ENCODE measurements at regions of chr3 and their contacts with region 1.

Region 1: DNA sequence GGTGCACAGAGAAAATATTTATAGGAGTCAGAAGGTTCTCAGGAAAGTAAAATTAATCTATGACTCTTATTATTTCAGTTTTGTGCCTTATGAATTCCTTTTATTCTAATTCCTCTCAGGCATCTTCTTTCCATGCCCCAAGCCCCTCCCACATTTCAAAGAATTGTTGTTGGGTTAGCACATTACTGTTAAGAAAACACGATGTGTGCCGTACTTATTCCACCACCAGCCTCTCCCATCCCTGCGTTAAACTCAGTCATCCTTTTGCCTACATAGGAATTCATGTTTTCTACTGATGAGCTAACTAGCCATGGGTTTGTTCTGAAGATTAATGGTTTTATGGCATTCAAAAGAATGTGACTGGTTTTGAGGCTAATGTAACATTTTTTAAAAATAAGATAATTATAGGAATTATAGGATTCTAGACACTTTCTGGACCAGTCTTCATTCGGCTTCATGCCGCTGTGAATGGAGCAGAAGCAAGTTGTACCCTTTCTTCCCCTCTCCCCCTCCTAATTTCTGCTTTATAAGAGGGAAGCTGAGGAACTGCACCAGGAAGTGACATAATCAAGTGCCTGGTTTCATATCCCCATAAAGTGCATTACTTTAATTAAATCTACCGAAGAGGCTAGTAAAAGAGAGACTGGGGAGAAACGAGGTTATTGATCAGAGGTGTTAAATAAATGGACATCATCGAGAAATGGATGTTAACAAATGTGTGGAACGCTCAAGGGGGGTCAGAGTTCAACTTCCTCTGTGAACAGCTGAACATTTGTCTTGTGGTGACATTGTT is 12.3 kb upstream of the MB21D2 start:
- DNase-seq: no peak
- H3K4me3 ChIP-seq: no peak overlapping the region
- H3K27ac ChIP-seq: no peak overlapping the region
- H3K4me1 ChIP-seq: no peaks in the 10 kb centered on the region
- H3K27me3 ChIP-seq: no peaks in the 10 kb centered on the region
- CTCF ChIP-seq: no peak
- POLR2A ChIP-seq: no peak

Region 2: DNA sequence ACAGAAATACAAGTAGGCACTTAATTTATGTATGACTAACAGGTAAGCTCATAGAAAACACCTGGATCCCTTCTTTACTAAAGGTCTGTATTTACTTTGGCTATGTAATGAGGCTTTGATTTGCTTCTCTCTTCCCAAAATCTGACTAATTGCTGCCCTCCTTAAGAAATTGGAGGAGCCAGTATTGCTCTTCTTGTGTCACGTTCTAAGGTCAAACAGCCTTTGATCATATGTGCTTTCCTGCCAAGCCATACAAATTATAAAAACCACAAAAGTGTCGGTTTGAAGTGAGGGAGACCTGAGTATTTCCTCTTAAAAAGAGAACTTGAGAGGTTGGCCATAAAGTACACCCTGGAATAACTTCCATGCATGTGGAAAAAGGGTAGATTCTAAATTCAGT is 99.8 kb after region 1 on chr3:
- intact Hi-C with region 1: loop called (anchors 10 kb)
- DNase-seq: no peak
- H3K4me3 ChIP-seq: no peak overlapping the region
- H3K27ac ChIP-seq: no peak overlapping the region
- H3K4me1 ChIP-seq: no peaks in the 10 kb centered on the region
- H3K27me3 ChIP-seq: no peaks in the 10 kb centered on the region
- CTCF ChIP-seq: no peak
- POLR2A ChIP-seq: no peak

Region 3: DNA sequence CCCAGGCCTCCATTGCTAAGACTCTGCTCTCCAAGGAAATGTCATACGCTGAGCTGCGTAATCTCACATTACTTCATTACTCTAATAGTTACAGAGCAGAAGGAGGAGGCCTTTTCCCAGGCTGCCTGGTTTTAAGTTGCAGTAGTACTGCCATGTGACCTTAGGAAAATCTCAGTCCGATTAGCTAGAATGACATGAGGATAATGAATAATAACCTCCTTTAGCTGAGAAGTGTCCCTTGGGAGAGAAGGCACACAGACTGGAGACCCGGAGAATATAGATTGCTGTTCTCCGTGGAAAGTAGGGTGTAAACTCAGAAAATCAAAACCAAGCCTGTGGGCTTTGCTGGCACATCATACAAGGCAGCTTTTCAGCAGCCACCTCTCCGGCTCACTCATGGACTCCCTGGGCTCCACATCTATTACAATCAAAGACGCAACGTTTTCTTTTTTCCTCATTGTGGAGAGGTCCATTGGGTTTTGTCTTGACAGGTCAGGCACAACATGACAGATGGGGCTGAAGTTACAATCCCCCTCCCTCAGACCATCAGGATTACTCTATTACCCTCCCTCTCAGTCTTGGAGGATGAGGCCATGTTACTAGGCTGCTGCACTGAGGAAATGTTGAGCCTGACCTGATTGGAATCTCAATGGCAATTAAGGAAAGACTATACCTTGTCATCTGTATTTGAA is 122.5 kb after region 1 on chr3:
- intact Hi-C with region 1: no loop called
- DNase-seq: no peak
- H3K4me3 ChIP-seq: no peak overlapping the region
- H3K27ac ChIP-seq: no peak overlapping the region
- H3K4me1 ChIP-seq: no peaks in the 10 kb centered on the region
- H3K27me3 ChIP-seq: no peaks in the 10 kb centered on the region
- CTCF ChIP-seq: no peak
- POLR2A ChIP-seq: no peak

Measured in prostate gland (tissue), 2 donors.